ENCODE measurements at regions of chr12 and their contacts with region 1.

Region 1: DNA sequence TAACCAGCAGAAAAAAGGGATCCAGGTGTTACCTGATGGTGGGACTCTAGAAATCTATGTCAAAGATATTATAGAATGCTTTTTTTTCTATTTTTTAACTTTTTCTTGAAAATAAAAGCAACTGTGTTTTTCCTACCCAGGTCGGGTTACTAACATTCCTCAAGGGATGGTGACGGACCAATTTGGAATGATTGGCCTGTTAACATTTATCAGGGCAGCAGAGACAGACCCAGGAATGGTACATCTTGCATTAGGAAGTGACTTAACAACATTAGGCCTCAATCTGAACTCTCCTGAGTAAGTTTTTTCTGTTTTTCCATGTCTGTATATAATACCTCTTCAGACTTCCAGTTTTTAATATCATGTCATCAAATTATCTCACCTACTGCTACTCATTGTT is 27.6 kb upstream of the KCNMB4 start:
- DNase-seq: no peak
- H3K4me3 ChIP-seq: no peak overlapping the region
- H3K27ac ChIP-seq: no peak overlapping the region
- H3K4me1 ChIP-seq: no peaks in the 10 kb centered on the region
- CTCF ChIP-seq: no peak

Region 2: GRCh38 chr12:69698769-69699540 is 639.6 kb before region 1 on chr12 and contains the start of gene BEST3:
- CTCF ChIA-PET with region 1: no interaction called
- POLR2A ChIA-PET with region 1: interaction called, 11 read pairs
- intact Hi-C with region 1: no loop called
- DNase-seq: peak; percentile 92
- H3K4me3 ChIP-seq: peak within 1 kb of the TSS; percentile 95
- H3K27ac ChIP-seq: peak within 1 kb of the TSS; percentile 98
- H3K4me1 ChIP-seq: peaks cover 52% of the 10 kb centered on the region
- CTCF ChIP-seq: no peak
- total RNA-seq, gene BEST3: 105 and 123 TPM in 2 replicates

Region 3: DNA sequence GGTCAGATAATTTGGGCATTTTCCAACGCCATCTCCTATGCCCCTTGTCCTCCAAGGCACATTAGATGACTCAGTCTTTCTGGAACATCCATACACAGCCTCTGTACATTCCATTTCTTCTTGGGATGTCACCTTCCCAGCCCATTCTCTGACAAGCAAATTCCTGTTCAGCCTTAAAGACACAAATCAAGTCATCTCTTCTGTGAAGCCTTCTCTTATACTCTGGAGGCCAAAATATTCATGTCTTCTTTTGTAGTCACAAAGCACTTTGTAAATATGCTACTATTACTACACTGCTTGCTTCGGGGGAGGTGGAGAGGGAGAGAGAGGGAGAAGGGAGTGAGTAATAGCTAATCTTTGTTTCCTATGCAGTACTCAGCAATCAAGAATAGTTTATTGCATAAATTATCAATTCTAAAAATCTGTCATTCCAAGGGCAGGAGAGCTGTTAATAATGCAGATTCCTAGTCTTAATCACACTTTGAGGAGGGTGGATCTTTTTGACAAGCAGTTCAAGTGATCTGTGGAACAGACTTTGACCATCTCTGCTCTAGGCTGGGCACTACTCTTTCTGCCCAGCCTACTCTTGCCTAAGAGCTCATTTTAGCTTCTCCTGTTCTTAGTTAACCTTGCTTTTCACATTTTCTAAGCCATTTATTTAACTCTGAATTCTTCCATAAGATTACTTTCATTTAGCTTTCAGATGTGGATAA is 55.4 kb after region 1 on chr12:
- CTCF ChIA-PET with region 1: no interaction called
- POLR2A ChIA-PET with region 1: no interaction called
- intact Hi-C with region 1: no loop called
- DNase-seq: no peak
- H3K4me3 ChIP-seq: no peak overlapping the region
- H3K27ac ChIP-seq: no peak overlapping the region
- H3K4me1 ChIP-seq: no peaks in the 10 kb centered on the region
- CTCF ChIP-seq: no peak

Measured in OCI-LY7 (cell line).